K562 (cell line): ENCODE measurements at regions of chr18 and their contacts with region 1.

Region 1: DNA sequence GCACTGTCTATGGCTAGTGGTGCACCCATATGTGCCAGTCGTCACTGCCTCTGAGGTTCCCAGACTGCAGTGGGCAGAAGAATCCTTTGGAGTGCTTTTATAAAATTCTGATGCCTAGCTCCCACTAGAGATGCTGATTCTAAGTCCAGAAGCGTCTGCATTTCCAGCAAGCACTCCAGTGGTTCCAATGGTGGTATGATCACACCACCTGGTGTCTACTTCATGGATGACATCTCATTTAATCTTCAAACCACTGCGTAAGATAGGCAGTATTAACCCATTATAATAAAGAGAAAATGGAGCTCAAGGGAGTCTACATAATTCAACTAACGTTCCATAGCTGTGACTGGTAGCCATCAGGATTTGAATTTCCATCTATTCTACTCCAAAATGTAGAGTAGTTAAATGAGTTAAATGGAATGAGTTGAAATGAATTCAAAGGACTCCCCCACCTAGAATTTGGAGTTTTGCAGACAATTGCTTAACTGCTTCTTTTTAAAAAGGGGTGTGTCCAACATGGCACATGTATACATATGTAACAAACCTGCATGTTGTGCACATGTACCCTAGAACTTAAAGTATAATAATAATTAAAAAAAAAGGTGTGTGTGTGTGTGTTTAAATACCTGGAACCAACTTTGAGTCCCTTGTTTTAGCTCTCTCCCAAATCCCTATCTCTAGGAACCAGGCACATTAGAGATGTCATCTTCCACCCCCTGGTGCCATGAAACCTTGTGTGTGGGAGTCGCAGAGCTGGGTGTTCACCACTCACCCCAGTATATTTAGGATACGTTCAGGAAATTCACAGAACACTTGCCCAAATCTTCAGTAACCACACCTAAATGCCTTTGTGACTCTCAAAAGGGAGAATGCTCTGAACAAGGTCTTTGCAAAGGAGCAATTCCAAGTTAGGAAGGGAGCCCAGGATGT is 14.1 kb downstream of the LAMA3 start:
- DNase-seq: peak; percentile 39 to 51 (median 43)
- ATAC-seq: peak; percentile 87
- H3K4me3 ChIP-seq: no peak overlapping the region
- H3K27ac ChIP-seq: no peak overlapping the region
- H3K4me1 ChIP-seq: peaks cover 0 to 4% of the 10 kb centered on the region in 2 experiments; a peak in 1 of 5 replicates
- H3K27me3 ChIP-seq: peaks cover 19 to 26% of the 10 kb centered on the region in 2 experiments
- CTCF ChIP-seq: peak; percentile 57 to 84 (median 64); a peak in 5 of 6 replicates
- EP300 ChIP-seq: no peak
- POLR2A ChIP-seq: no peak
- RAD21 ChIP-seq: peak; percentile 80 to 91

Region 2: DNA sequence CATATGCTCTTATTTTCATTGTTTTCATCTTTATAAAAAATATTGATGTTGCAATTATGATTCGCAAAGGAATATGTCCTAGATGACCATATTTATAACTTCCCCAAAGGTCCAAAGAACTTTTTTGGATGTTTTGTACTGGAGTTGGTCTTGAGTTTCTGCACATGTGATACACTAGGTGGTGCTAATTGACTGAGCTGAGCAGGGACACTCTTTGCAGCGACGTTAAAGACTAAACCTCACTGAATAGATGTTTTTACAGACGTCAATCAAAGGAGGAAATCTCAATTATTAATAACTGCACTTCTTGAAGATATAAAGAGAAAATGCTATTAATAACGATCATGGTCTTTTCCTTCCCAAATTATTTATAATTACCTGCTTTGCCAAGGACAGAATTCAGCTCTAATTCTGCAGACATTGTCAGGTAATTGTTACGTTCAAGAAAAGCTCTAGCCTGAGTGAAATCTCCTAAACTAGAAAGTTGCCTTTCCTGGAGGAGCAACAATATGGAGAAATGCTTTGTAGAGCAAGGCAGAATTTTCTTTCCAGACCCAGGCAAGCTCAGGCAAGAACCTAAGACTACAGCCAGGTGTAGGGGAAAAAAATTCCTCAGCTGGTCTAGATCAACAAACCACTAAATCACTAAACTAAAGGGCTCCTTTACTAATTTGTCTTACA is 889.5 kb before region 1 on chr18:
- CTCF ChIA-PET with region 1: no interaction called
- POLR2A ChIA-PET with region 1: no interaction called
- in situ Hi-C with region 1: no loop called
- intact Hi-C with region 1: loop called (anchors 5 kb)
- DNase-seq: peak; percentile 20 to 30 (median 22)
- ATAC-seq: peak; percentile 83
- H3K4me3 ChIP-seq: no peak overlapping the region
- H3K27ac ChIP-seq: no peak overlapping the region
- H3K4me1 ChIP-seq: peaks cover 0 to 6% of the 10 kb centered on the region in 2 experiments; a peak in 1 of 5 replicates
- H3K27me3 ChIP-seq: peaks cover 2 to 11% of the 10 kb centered on the region in 2 experiments; a peak in 2 of 5 replicates
- CTCF ChIP-seq: peak; percentile 48 to 65 (median 52); a peak in 4 of 6 replicates
- EP300 ChIP-seq: no peak
- POLR2A ChIP-seq: no peak
- RAD21 ChIP-seq: peak; percentile 75 to 82

Region 3: GRCh38 chr18:23515911-23516546 is 187.3 kb before region 1 on chr18:
- CTCF ChIA-PET with region 1: no interaction called
- POLR2A ChIA-PET with region 1: no interaction called
- in situ Hi-C with region 1: no loop called
- intact Hi-C with region 1: loop called (anchors 1 kb)
- DNase-seq: peak; percentile 78 to 90 (median 80)
- ATAC-seq: peak; percentile 100
- H3K4me3 ChIP-seq: no peak overlapping the region
- H3K27ac ChIP-seq: no peak overlapping the region
- H3K4me1 ChIP-seq: no peaks in the 10 kb centered on the region; a peak in 1 of 5 replicates
- H3K27me3 ChIP-seq: no peaks in the 10 kb centered on the region
- CTCF ChIP-seq: peak; percentile 92 to 99 (median 93)
- EP300 ChIP-seq: no peak
- POLR2A ChIP-seq: no peak
- RAD21 ChIP-seq: peak; percentile 83 to 90

Region 4: DNA sequence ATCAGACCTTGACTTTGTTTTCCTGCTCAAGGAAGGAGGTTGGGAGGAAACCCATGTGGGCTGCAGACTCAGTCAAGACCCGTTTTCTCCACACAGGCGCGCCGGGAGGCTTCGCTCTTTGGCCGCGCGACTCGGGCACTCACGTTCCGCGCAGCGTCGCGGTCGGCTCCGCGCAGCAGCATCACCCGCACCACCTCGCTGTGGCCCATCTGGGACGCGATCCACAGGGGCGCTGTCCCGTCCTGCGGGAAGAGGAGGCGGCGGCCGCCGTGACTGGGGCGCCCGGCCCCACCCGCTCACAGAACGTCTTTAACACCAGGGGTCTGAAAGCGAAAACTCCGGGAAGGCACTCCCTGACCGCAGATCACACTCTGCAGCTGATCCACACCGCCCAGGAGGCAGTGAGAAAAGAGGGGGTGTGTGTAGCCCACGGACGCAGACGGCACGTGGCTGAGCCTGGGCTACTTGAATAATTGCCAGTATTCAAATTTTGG is 83.9 kb before region 1 on chr18:
- CTCF ChIA-PET with region 1: interaction called, 3 read pairs
- POLR2A ChIA-PET with region 1: no interaction called
- in situ Hi-C with region 1: no loop called
- intact Hi-C with region 1: loop called (anchors 1 kb)
- DNase-seq: no peak
- ATAC-seq: peak; percentile 12
- H3K4me3 ChIP-seq: no peak overlapping the region
- H3K27ac ChIP-seq: no peak overlapping the region
- H3K4me1 ChIP-seq: peaks cover 0 to 8% of the 10 kb centered on the region in 2 experiments; a peak in 2 of 5 replicates
- H3K27me3 ChIP-seq: peaks cover 26% of the 10 kb centered on the region in 2 experiments
- CTCF ChIP-seq: no peak
- EP300 ChIP-seq: no peak
- POLR2A ChIP-seq: no peak
- RAD21 ChIP-seq: no peak

Region 5: DNA sequence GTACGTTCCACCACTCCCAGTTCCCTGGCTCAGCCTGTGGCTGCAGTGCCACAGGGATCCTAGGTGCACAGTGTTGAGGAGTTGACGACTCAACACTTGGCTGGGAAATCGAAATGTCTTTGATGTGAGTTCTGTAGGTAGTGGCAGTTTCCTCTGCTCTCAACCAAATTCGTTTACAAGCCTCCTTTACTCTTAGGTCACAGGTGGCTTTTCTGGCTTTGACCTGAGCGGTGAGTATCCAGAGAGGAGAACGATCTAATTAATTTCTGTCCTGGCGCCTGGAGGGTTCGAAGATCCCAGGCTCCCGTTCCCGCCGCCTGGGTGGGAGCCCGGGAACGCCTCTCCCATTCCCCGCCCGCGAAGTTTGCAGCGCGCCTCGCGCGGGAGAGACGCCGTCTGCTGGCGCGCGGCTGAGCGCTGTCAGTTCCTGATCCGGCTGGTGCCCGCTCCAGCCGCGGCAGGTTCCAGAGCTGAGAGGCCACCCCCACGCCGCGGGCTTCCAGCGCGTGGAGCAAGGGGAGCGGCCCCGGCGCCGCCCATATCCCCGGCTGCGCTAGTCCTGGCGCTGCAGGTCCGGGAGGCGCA is 14.2 kb before region 1 on chr18 and contains the start of gene LAMA3:
- CTCF ChIA-PET with region 1: no interaction called
- POLR2A ChIA-PET with region 1: no interaction called
- in situ Hi-C with region 1: no loop called
- intact Hi-C with region 1: no loop called
- DNase-seq: no peak
- ATAC-seq: no peak
- H3K4me3 ChIP-seq: no peak within 1 kb of the TSS
- H3K27ac ChIP-seq: no peak within 1 kb of the TSS
- H3K4me1 ChIP-seq: peaks cover 0 to 15% of the 10 kb centered on the region in 2 experiments; a peak in 2 of 5 replicates
- H3K27me3 ChIP-seq: peaks cover 16 to 35% of the 10 kb centered on the region in 2 experiments
- CTCF ChIP-seq: no peak
- EP300 ChIP-seq: no peak
- POLR2A ChIP-seq: no peak
- RAD21 ChIP-seq: no peak
- polyA plus RNA-seq, gene LAMA3: not detected